Endothelial cell of umbilical vein (primary cell): ENCODE measurements at regions of chr6 and their contacts with region 1.

Region 1: GRCh38 chr6:30102970-30103874 is 9.7 kb downstream of the TRIM31 start:
- DNase-seq: peak; percentile 82
- H3K4me3 ChIP-seq: peak overlapping the region in 2 of 3 experiments; percentile 33 to 34
- H3K27ac ChIP-seq: no peak overlapping the region
- H3K4me1 ChIP-seq: peaks cover 17% of the 10 kb centered on the region
- H3K27me3 ChIP-seq: peaks cover 49 to 58% of the 10 kb centered on the region in 2 experiments
- CTCF ChIP-seq: peak; percentile 85 to 92
- POLR2A ChIP-seq: no peak

Region 2: GRCh38 chr6:30013291-30013922 is 89.8 kb before region 1 on chr6:
- CTCF ChIA-PET with region 1: no interaction called
- POLR2A ChIA-PET with region 1: no interaction called
- dilution Hi-C with region 1: no loop called
- intact Hi-C with region 1: no loop called
- DNase-seq: peak; percentile 26
- H3K4me3 ChIP-seq: no peak overlapping the region
- H3K27ac ChIP-seq: no peak overlapping the region
- H3K4me1 ChIP-seq: no peaks in the 10 kb centered on the region
- H3K27me3 ChIP-seq: peaks cover 4% of the 10 kb centered on the region in 2 experiments
- CTCF ChIP-seq: peak; percentile 65 to 89
- POLR2A ChIP-seq: no peak

Region 3: GRCh38 chr6:30061092-30061857 is 41.9 kb before region 1 on chr6 and contains the start of gene POLR1H:
- CTCF ChIA-PET with region 1: interaction called, 13 read pairs
- POLR2A ChIA-PET with region 1: interaction called, 6 read pairs
- dilution Hi-C with region 1: no loop called
- intact Hi-C with region 1: loop called (anchors 1 kb)
- DNase-seq: peak; percentile 94
- H3K4me3 ChIP-seq: peak within 1 kb of the TSS; percentile 78 to 94 (median 80)
- H3K27ac ChIP-seq: peak within 1 kb of the TSS; percentile 57
- H3K4me1 ChIP-seq: peaks cover 21% of the 10 kb centered on the region
- H3K27me3 ChIP-seq: no peaks in the 10 kb centered on the region
- CTCF ChIP-seq: peak in 1 of 2 donors; percentile 7
- POLR2A ChIP-seq: peak; percentile 98
- total RNA-seq, gene POLR1H: 32.5 and 42.5 TPM in 2 replicates

Region 4: GRCh38 chr6:30066577-30067459 is 36.4 kb before region 1 on chr6 and contains the start of gene PPP1R11:
- CTCF ChIA-PET with region 1: interaction called, 13 read pairs
- POLR2A ChIA-PET with region 1: interaction called, 6 read pairs
- dilution Hi-C with region 1: no loop called
- intact Hi-C with region 1: loop called (anchors 1 kb)
- DNase-seq: peak; percentile 100
- H3K4me3 ChIP-seq: peak within 1 kb of the TSS; percentile 47 to 75 (median 51)
- H3K27ac ChIP-seq: peak within 1 kb of the TSS; percentile 91
- H3K4me1 ChIP-seq: peaks cover 22% of the 10 kb centered on the region
- H3K27me3 ChIP-seq: peaks cover 13 to 16% of the 10 kb centered on the region in 2 experiments
- CTCF ChIP-seq: no peak
- POLR2A ChIP-seq: no peak
- total RNA-seq, gene PPP1R11: 32.4 and 37.6 TPM in 2 replicates

Region 5: DNA sequence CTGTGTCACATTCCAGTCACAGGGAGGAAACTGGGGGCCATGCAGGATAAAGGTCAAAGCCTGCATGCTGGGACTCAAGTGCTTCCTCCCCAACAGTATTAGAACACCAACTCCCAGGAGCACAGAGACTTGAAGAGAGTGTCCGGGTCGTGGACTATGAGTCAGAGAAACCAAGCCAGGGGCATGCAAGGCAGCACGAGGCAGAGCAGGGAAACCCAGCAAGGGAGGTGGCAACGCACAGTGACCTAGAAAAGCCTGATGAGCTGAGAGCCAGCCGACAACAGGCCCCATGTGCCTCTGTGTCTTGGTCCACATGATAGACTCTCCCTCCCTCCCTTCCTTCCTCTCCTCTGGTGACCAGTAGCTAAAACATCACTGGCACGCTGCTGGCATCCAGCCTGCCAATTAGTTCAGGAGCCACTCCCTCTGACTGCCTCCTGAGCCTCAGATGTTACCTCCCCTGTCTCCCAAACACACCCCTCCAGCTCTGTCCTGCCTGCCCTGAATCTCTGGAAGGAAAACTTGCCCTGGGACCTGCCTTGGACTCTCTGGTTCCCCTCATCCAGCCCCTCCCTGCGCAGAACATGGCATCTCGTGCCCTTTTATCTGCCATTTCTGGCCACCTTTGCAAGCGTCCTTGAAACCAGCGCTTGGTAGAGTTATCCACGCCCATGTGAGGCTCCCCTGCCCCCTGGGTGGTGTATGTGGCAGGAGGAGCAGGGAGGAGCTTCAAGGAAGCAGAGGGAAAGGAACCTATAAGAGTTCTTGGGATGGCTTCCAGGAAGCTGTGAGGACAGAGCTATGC is 11.4 kb before region 1 on chr6:
- CTCF ChIA-PET with region 1: interaction called, 18 read pairs
- POLR2A ChIA-PET with region 1: no interaction called
- dilution Hi-C with region 1: no loop called
- intact Hi-C with region 1: no loop called
- DNase-seq: no peak
- H3K4me3 ChIP-seq: no peak overlapping the region
- H3K27ac ChIP-seq: no peak overlapping the region
- H3K4me1 ChIP-seq: no peaks in the 10 kb centered on the region
- H3K27me3 ChIP-seq: peaks cover 16 to 37% of the 10 kb centered on the region in 2 experiments
- CTCF ChIP-seq: no peak
- POLR2A ChIP-seq: no peak

Region 6: DNA sequence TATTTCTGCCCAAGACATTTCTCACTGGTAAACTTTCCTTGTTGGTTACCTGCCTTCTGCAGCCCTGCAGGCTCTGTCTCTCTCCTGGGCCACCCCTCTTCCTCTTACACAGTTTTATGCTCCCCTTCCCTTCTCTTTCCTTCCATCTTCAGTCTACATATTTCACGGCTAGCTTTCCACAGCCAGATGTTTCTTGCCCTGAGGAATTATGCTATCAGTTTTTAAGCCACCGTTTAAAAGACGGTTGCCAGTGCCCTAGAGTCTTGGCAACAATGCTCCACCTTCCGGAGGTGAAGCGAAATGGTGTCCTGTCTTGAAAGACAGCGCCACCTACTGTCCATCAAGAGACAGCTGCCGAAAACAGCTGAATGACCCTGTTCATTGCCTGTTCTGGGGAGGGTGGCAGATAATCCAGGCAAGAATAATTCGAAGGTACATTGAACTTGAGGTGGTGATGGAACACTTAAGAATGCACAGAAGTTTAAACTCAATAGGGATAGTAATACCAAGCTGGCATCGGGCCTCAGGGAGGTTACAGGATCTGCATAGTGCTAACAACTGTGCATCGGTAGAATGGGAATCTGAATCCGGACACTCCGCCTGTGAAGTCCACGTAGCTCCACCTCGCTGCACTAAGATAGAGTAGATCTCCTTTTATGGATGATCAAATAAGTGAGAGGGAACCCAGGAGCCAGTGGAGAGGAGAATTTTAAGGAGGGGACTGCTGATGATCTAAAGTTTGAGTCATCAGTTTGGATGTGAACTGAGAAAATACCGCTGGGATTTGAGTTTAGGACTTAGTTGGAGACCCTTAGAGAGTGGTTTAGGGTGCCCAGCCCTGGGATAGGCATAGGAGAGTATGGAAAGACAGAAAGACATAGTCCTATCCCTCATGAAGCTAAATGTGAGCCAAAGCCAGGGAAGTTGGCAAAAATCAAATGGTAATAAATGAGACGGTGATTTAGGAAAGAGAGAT is 28.0 kb after region 1 on chr6:
- CTCF ChIA-PET with region 1: interaction called, 311 read pairs
- POLR2A ChIA-PET with region 1: no interaction called
- dilution Hi-C with region 1: no loop called
- intact Hi-C with region 1: loop called (anchors 1 kb)
- DNase-seq: peak; percentile 57
- H3K4me3 ChIP-seq: no peak overlapping the region
- H3K27ac ChIP-seq: no peak overlapping the region
- H3K4me1 ChIP-seq: no peaks in the 10 kb centered on the region
- H3K27me3 ChIP-seq: peaks cover 49 to 74% of the 10 kb centered on the region in 2 experiments
- CTCF ChIP-seq: peak; percentile 95
- POLR2A ChIP-seq: no peak

Region 7: DNA sequence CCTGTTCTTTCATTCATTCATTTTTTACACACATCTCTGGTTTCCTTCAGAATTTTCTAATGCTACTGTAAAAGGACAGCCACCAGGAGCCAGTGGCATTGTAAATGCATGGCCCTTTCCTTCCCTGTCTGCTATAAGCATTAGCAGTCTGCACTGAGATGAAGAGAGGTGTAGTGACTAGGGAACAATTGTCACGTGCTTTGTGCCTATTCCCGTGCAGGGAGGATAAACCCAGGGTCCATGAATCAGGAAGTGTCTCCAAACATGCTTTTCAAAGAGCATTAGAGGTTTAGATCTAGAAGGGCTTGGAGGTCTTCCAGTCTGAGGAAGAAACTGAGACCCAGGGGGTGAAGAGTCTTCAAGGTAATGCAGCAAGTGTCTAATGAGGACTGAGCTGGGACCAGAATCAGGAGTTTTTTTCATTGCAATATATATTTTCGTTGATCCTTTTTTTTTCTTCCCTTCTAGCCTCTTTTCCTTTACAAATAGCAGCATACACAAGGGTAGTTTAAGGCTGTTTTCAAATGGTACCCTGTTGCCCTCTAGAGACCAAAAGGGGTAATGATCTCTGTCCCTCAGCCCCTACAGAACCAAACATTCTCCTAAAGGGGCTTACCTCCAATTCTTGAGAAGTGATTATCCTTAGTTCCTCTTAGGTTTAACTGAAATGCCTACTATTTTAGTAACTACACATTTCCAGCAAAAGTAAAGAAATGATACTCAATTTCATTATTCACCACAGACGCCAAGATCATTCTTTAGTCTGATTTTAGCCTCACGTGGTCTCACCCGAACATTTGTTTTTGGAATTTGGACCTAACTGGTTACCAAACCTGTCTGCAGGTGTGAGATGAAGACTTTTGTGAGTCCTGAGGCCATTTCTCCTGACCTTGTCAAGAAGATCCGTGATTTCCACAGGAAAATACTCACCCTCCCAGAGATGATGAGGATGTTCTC is 66.7 kb after region 1 on chr6:
- CTCF ChIA-PET with region 1: interaction called, 19 read pairs
- POLR2A ChIA-PET with region 1: no interaction called
- dilution Hi-C with region 1: no loop called
- intact Hi-C with region 1: loop called (anchors 1 kb)
- DNase-seq: peak; percentile 66
- H3K4me3 ChIP-seq: no peak overlapping the region
- H3K27ac ChIP-seq: no peak overlapping the region
- H3K4me1 ChIP-seq: no peaks in the 10 kb centered on the region
- H3K27me3 ChIP-seq: peaks cover 51 to 74% of the 10 kb centered on the region in 2 experiments
- CTCF ChIP-seq: peak; percentile 57 to 74
- POLR2A ChIP-seq: no peak

Region 8: GRCh38 chr6:30212865-30213666 is 109.8 kb after region 1 on chr6 and contains the start of gene TRIM26:
- CTCF ChIA-PET with region 1: interaction called, 6 read pairs
- POLR2A ChIA-PET with region 1: no interaction called
- dilution Hi-C with region 1: no loop called
- intact Hi-C with region 1: loop called (anchors 2 kb)
- DNase-seq: peak; percentile 98
- H3K4me3 ChIP-seq: peak within 1 kb of the TSS; percentile 71 to 84 (median 82)
- H3K27ac ChIP-seq: peak within 1 kb of the TSS; percentile 95
- H3K4me1 ChIP-seq: peaks cover 20% of the 10 kb centered on the region
- H3K27me3 ChIP-seq: no peaks in the 10 kb centered on the region
- CTCF ChIP-seq: no peak
- POLR2A ChIP-seq: peak; percentile 79
- total RNA-seq, gene TRIM26: 34.5 and 35.0 TPM in 2 replicates